K562 (cell line): ENCODE measurements at regions of chr7 and their contacts with region 1.

Region 1: GRCh38 chr7:4610768-4611467 is 71.2 kb upstream of the FOXK1 start:
- DNase-seq: peak; percentile 59 to 82 (median 64)
- ATAC-seq: peak; percentile 82
- H3K4me3 ChIP-seq: no peak overlapping the region
- H3K27ac ChIP-seq: no peak overlapping the region
- H3K4me1 ChIP-seq: peaks cover 12 to 15% of the 10 kb centered on the region in 2 experiments; a peak in 4 of 5 replicates
- H3K27me3 ChIP-seq: peaks cover 8 to 19% of the 10 kb centered on the region in 2 experiments
- CTCF ChIP-seq: peak; percentile 74 to 91 (median 85)
- EP300 ChIP-seq: no peak
- POLR2A ChIP-seq: no peak
- RAD21 ChIP-seq: peak; percentile 94 to 97

Region 2: DNA sequence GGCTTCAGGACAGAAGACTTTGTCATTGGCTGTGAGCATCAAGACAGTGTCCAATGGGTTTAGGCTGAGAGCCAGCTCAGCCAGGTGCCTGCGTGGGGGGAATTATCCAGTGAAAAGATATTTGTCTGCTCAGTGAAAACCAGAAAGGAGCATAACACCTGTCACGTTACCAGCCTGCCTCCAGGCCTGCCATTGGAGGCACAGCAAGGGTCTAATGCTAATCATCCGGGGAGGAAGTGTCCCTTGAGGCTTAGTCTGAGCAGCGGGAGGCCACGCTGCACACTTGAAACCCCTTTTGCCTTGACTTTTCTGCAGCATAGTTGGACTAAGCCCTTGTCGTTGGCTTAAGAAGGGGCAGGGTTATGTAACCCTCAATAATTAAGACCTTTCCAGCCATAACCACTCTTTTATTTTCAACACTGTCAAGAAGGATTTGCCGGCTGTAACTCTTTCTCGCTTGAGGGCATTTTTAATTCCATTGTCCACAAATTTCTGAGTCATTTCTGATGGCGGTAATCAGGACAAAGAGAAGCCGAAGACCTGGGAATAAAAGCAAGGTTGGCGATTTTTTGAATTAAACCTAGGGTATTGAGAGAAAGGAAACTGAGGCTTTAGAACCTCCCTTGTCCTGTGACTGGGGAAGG is 568.4 kb before region 1 on chr7:
- CTCF ChIA-PET with region 1: no interaction called
- POLR2A ChIA-PET with region 1: no interaction called
- in situ Hi-C with region 1: no loop called
- intact Hi-C with region 1: no loop called
- DNase-seq: no peak
- ATAC-seq: no peak
- H3K4me3 ChIP-seq: no peak overlapping the region
- H3K27ac ChIP-seq: no peak overlapping the region
- H3K4me1 ChIP-seq: no peaks in the 10 kb centered on the region
- H3K27me3 ChIP-seq: peaks cover 1 to 15% of the 10 kb centered on the region in 2 experiments; a peak in 3 of 5 replicates
- CTCF ChIP-seq: no peak
- EP300 ChIP-seq: no peak
- POLR2A ChIP-seq: no peak
- RAD21 ChIP-seq: no peak

Region 3: DNA sequence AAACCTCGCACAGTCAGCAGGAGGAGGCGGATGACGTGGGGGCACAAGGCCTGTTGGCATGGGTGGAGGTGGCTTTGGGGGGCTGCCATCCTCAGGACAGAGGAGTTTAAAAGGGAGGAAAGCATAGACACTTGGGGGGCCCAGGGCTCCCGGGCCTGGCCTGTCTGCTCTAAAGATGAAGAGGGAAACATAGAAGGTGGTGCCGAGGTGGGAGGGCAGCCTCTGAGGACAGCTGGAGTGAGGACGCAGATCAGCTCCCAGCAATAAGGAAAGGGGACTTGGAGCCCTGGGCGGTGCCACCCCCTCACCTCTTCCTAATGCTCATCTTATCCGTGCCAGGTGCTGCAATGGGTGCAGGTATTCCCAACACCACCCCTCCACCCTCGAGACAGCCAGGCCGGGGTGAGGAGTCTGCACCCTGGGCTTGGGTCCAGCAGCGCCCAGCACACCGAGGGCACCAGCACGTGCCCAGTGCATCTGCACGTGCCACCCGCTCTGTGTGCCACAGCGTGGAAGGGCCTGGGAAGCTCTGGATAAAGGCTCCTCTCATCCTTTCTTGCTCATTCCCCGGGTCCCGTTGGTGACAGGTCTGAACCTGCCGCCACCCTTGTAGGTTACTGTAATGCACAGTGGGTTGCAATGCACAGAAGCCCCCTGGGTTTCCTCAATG is 494.8 kb before region 1 on chr7:
- CTCF ChIA-PET with region 1: no interaction called
- POLR2A ChIA-PET with region 1: no interaction called
- in situ Hi-C with region 1: no loop called
- intact Hi-C with region 1: no loop called
- DNase-seq: no peak
- ATAC-seq: no peak
- H3K4me3 ChIP-seq: no peak overlapping the region
- H3K27ac ChIP-seq: no peak overlapping the region
- H3K4me1 ChIP-seq: no peaks in the 10 kb centered on the region; a peak in 1 of 5 replicates
- H3K27me3 ChIP-seq: peaks cover 10 to 42% of the 10 kb centered on the region in 2 experiments; a peak in 4 of 5 replicates
- CTCF ChIP-seq: no peak
- EP300 ChIP-seq: no peak
- POLR2A ChIP-seq: no peak
- RAD21 ChIP-seq: no peak

Region 4: DNA sequence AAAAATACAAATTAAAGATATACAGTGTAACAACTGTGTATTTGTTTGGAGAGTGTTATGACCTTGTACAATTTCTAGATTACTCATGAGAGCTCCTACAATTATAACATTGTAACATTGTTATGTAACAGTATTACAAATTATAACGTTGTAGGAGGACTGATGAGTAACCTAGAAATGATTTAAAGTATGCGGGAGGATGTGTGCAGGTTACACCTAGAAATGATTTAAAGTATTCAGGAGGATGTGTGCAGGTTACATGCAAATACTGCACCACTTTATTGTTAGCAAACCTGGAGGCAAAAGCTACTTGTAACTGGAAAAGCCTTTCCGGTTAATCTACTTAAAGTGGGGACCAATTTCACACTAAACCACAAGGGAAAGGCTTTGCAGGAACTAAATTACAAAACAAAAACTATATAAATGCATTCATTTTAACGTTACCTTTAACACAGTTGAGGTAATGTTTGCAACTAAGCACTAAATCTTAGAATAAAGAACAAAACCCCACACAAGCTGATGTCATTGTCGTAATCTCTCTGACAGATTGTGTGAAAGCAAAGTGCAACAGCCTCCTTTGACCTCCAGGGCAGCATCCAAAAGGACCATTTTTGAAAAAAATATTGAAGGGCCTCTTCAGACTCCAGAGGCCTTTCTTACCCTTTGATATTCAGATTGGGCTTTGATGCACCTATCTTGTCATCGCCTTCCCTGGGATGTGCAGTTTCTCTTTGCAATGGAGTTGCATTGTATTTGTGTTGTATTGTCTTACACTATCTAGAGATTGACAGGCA is 451.0 kb before region 1 on chr7:
- CTCF ChIA-PET with region 1: no interaction called
- POLR2A ChIA-PET with region 1: no interaction called
- in situ Hi-C with region 1: no loop called
- intact Hi-C with region 1: no loop called
- DNase-seq: no peak
- ATAC-seq: no peak
- H3K4me3 ChIP-seq: no peak overlapping the region
- H3K27ac ChIP-seq: no peak overlapping the region
- H3K4me1 ChIP-seq: no peaks in the 10 kb centered on the region; a peak in 1 of 5 replicates
- H3K27me3 ChIP-seq: peaks cover 18 to 70% of the 10 kb centered on the region in 2 experiments; a peak in 4 of 5 replicates
- CTCF ChIP-seq: no peak
- EP300 ChIP-seq: no peak
- POLR2A ChIP-seq: no peak
- RAD21 ChIP-seq: no peak

Region 5: GRCh38 chr7:4631664-4632171 is 20.8 kb after region 1 on chr7:
- CTCF ChIA-PET with region 1: interaction called, 30 read pairs
- POLR2A ChIA-PET with region 1: interaction called, 3 read pairs
- in situ Hi-C with region 1: no loop called
- intact Hi-C with region 1: loop called (anchors 1 kb)
- DNase-seq: peak; percentile 46 to 84 (median 62)
- ATAC-seq: peak; percentile 89
- H3K4me3 ChIP-seq: no peak overlapping the region
- H3K27ac ChIP-seq: no peak overlapping the region
- H3K4me1 ChIP-seq: peaks cover 0 to 9% of the 10 kb centered on the region in 2 experiments; a peak in 3 of 5 replicates
- H3K27me3 ChIP-seq: no peaks in the 10 kb centered on the region; a peak in 1 of 5 replicates
- CTCF ChIP-seq: peak; percentile 82 to 92 (median 89)
- EP300 ChIP-seq: no peak
- POLR2A ChIP-seq: no peak
- RAD21 ChIP-seq: peak; percentile 90 to 94

Region 6: DNA sequence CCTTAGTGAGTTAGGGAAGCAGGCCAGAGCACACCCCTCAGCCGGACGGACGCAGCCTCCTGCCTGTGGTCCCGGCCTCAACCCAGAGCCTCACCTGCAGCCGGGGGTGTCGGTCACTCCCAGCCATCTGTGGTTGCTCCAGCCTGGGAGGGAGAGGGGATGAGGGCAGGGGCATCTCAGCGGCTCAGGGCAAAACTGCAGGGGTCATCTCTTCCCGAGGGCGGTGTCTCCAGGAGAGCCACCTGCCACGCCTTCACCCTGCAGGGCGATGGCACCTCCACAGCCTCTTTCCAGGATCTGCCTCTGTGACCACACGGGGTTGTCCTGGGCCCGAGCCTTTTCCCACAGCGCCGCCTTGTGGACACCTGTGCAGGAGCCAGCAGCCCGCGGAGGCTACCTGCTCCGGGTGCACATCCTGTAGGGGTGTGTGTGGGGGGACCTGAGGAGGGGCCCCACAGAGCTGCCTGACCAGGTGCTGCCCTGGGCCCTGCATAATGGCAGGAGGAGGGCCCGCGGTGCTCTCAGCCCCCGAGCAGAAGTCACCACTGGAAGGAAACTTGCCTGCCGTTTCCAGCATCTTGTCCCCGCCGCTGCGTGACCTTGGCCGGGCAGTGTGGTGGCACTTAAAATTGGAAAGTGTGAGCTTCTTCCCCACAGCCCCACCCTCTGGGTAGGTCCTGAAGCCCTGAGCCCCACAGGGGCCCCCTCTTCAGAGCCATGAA is 143.0 kb after region 1 on chr7:
- CTCF ChIA-PET with region 1: interaction called, 9 read pairs
- POLR2A ChIA-PET with region 1: no interaction called
- in situ Hi-C with region 1: no loop called
- intact Hi-C with region 1: loop called (anchors 1 kb)
- DNase-seq: peak; percentile 80 to 84 (median 81)
- ATAC-seq: peak; percentile 99
- H3K4me3 ChIP-seq: no peak overlapping the region
- H3K27ac ChIP-seq: no peak overlapping the region
- H3K4me1 ChIP-seq: peaks cover 0 to 24% of the 10 kb centered on the region in 2 experiments; a peak in 2 of 5 replicates
- H3K27me3 ChIP-seq: no peaks in the 10 kb centered on the region
- CTCF ChIP-seq: peak; percentile 88 to 97 (median 89)
- EP300 ChIP-seq: no peak
- POLR2A ChIP-seq: no peak
- RAD21 ChIP-seq: peak; percentile 58 to 87